ENCODE measurements at regions of chr12 and their contacts with region 1.

Region 1: GRCh38 chr12:62259993-62260732 is at the start of gene USP15:
- H3K4me3 Mint-ChIP-seq: peak within 1 kb of the TSS; percentile 86
- H3K27ac Mint-ChIP-seq: peak within 1 kb of the TSS; percentile 94
- H3K4me1 Mint-ChIP-seq: peaks cover 42% of the 10 kb centered on the region
- H3K27me3 Mint-ChIP-seq: no peaks in the 10 kb centered on the region

Region 2: GRCh38 chr12:62217466-62218194 is 42.5 kb before region 1 on chr12:
- intact Hi-C with region 1: loop called (anchors 2 kb)
- H3K4me3 Mint-ChIP-seq: no peak overlapping the region
- H3K27ac Mint-ChIP-seq: peak overlapping the region; percentile 45
- H3K4me1 Mint-ChIP-seq: peaks cover 37% of the 10 kb centered on the region
- H3K27me3 Mint-ChIP-seq: no peaks in the 10 kb centered on the region

Region 3: DNA sequence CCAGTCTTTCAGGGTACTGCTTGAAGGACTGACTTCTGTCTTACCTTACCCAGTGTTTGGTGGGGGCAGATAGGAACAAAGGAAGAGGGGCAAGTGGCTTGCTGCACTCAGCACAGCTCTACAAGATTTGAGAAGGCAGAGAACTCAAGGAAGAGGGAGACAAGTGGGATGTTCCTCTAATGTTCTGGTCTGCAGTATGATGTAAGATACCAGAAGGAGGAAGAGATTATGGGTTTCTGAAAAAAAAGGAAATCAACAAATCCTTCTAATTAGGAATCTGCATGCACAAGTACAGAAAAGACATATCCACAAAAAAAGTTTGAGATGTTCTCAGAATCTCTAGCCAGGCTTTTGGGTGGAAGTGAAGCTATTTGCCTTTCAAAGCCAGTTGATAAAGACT is 37.2 kb after region 1 on chr12:
- intact Hi-C with region 1: loop called (anchors 5 kb)
- H3K4me3 Mint-ChIP-seq: no peak overlapping the region
- H3K27ac Mint-ChIP-seq: peak overlapping the region; percentile 71
- H3K4me1 Mint-ChIP-seq: peaks cover 79% of the 10 kb centered on the region
- H3K27me3 Mint-ChIP-seq: no peaks in the 10 kb centered on the region

Region 4: DNA sequence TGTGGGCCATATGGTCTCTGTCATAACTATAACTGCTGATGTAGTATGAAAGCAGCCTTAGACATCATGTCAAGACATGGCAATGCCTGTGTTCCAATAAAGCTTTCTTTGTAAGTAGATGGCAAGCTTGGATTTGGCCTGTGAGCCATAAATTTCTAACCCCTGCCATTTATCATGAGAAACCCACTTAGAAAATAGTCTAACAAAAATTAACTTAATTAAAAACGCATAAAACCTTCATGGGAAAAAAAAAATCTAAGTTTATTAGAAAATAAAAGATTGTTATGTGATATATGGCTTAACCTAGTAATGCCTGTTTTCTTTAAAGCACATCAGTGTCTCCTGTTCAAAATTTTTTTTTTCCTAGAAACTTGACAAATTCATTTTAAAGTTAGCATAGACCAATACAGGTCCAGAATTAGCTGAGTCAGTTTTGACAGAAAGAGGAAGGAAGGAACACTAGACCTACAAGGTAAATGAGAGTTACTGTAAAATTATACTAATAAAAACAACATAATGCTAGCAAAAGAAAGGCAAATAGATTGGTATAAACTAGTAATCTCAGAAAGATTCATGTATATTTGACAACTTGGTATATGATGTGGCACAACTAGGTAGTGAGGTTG is 68.2 kb after region 1 on chr12:
- intact Hi-C with region 1: loop called (anchors 10 kb)
- H3K4me3 Mint-ChIP-seq: no peak overlapping the region
- H3K27ac Mint-ChIP-seq: peak overlapping the region; percentile 58
- H3K4me1 Mint-ChIP-seq: peaks cover 11% of the 10 kb centered on the region
- H3K27me3 Mint-ChIP-seq: no peaks in the 10 kb centered on the region

Measured in dendritic cell treated with granulocyte-macrophage colony-stimulating factor and Interleukin-4, amounts not matched to agents 40 ng/mL and 50 ng/mL, for 4 days (primary cell).